CD14-positive monocyte (primary cell): ENCODE measurements at regions of chr7 and their contacts with region 1.

Region 1: DNA sequence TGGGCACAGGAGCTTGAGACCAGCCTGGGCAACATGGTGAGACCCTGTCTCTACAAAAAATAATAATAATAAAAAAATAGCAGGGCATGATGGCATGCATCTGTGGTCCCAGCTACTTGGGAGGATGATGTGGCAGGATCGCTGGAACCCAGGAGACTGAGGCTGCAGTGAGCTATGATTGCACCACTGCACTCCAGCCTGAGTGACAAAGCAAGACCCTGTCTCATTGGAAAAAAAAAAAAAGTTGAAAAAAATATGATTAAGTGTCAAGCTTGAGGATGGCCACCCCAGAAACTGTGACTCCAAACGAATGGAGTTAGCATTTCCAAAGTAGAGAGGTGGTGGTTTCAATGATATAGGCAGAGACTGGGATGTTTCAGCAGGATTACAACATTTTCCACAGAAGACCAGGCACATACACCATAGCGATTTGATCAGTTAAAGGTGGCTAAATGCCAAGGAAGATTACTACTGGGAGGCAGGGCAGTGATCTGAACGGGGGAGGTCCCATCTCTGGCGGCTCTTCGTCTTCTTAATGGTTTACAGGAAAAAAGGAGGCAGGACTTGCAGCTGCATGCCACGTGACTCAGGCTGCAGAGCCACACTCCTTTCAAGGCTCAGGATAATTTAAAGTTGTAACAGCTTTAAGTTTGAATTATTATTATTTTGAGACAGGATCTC is 250.6 kb upstream of the GALNT17 start:
- DNase-seq: no peak
- H3K4me3 ChIP-seq: no peak overlapping the region
- H3K4me3 Mint-ChIP-seq: no peak overlapping the region
- H3K27ac ChIP-seq: no peak overlapping the region
- H3K27ac Mint-ChIP-seq: no peak overlapping the region
- H3K4me1 ChIP-seq: no peaks in the 10 kb centered on the region
- H3K4me1 Mint-ChIP-seq: no peaks in the 10 kb centered on the region
- H3K27me3 ChIP-seq: no peaks in the 10 kb centered on the region
- H3K27me3 Mint-ChIP-seq: peaks cover 0 to 1% (median 0%) of the 10 kb centered on the region in 3 donors
- CTCF ChIP-seq: no peak

Region 2: GRCh38 chr7:70833726-70834125 is 47.6 kb before region 1 on chr7:
- intact Hi-C with region 1: no loop called
- DNase-seq: no peak
- H3K4me3 ChIP-seq: no peak overlapping the region
- H3K4me3 Mint-ChIP-seq: no peak overlapping the region
- H3K27ac ChIP-seq: no peak overlapping the region
- H3K27ac Mint-ChIP-seq: no peak overlapping the region
- H3K4me1 ChIP-seq: peaks cover 5 to 7% of the 10 kb centered on the region in 2 donors
- H3K4me1 Mint-ChIP-seq: peaks cover 11% of the 10 kb centered on the region
- H3K27me3 ChIP-seq: no peaks in the 10 kb centered on the region
- H3K27me3 Mint-ChIP-seq: peaks cover 6 to 16% (median 12%) of the 10 kb centered on the region in 3 donors
- CTCF ChIP-seq: no peak

Region 3: DNA sequence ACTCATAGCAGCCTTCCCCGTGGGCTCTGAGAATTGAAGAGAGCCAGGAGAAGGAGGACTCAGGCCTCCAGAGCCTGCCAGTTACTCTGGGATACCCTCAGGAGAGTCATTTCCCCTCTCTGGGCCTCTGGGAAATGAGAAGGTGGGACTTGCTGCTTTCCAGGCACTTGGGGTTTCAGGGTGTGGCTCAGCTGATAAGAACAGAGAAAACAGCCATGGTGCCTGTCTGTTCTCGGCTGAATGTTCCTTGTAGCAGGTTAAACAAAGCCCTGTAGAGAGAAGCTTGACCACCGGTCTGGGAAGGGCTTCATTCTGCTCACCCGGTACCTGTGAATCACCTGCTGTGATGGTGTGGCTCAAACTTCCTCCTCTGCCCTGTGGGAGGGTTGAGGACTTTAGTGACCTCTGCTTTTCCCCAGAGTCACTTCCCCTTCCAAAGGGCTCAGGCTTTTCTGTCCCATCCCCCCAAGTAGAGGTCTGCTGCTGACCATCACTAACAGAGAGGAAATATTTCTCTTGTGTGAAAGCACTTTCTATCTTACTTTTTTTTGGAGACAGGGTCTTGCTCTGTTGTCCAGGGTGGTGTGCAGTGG is 38.3 kb after region 1 on chr7:
- intact Hi-C with region 1: loop called in 1 of 2 experiments (anchors 5 kb)
- DNase-seq: no peak
- H3K4me3 ChIP-seq: no peak overlapping the region
- H3K4me3 Mint-ChIP-seq: no peak overlapping the region
- H3K27ac ChIP-seq: no peak overlapping the region
- H3K27ac Mint-ChIP-seq: no peak overlapping the region
- H3K4me1 ChIP-seq: no peaks in the 10 kb centered on the region
- H3K4me1 Mint-ChIP-seq: peaks cover 8% of the 10 kb centered on the region
- H3K27me3 ChIP-seq: no peaks in the 10 kb centered on the region
- H3K27me3 Mint-ChIP-seq: peaks cover 0 to 4% (median 3%) of the 10 kb centered on the region in 3 donors
- CTCF ChIP-seq: no peak

Region 4: GRCh38 chr7:71313553-71313952 is 432.2 kb after region 1 on chr7:
- intact Hi-C with region 1: no loop called
- DNase-seq: no peak
- H3K4me3 ChIP-seq: no peak overlapping the region
- H3K4me3 Mint-ChIP-seq: no peak overlapping the region
- H3K27ac ChIP-seq: no peak overlapping the region
- H3K27ac Mint-ChIP-seq: no peak overlapping the region
- H3K4me1 ChIP-seq: no peaks in the 10 kb centered on the region
- H3K4me1 Mint-ChIP-seq: no peaks in the 10 kb centered on the region
- H3K27me3 ChIP-seq: no peaks in the 10 kb centered on the region
- H3K27me3 Mint-ChIP-seq: peaks cover 0 to 2% (median 0%) of the 10 kb centered on the region in 3 donors
- CTCF ChIP-seq: no peak